HEK293 (cell line): ENCODE measurements at regions of chr11 and their contacts with region 1.

Region 1: DNA sequence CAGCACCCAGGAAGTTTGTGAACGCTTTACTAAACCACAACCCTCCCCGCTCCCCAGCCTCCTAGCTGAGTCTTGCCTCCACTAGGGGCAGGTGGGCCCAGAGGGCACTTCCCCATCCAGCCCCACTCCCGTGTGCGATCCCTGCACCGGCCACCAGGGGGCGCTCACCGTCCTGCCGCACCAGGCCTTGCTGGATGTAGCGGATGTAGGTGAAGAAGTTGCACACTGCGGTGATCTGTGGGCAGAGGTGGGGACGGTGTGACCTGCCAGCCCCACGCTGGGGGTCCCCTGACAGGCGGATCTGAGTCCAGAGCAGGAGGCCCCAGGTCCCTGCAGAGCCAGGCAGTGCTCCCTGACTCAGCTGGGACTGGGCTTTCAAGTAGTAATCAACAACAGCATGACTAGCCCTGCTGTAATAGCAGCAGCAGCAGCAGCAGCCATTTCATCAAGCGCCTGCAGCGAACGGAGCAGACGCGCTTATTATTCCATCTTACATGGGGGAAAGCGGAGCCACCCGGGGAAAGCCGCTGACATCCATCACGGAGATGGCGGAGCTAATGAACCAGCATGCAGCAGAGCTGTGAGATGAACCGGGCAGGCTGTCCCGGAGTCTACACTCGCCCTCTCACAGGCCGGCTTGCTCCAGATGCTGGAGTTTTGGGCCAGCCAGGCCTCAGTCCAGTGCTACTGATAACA is 7.9 kb upstream of the FADS3 start:
- H3K4me3 ChIP-seq: no peak overlapping the region
- H3K27ac ChIP-seq: no peak overlapping the region
- H3K4me1 ChIP-seq: no peaks in the 10 kb centered on the region
- CTCF ChIP-seq: peak; percentile 96

Region 2: GRCh38 chr11:61679893-61680621 is 219.2 kb before region 1 on chr11 and contains the start of gene DAGLA:
- CTCF ChIA-PET with region 1: no interaction called
- POLR2A ChIA-PET with region 1: no interaction called
- H3K4me3 ChIP-seq: peak within 1 kb of the TSS; percentile 49
- H3K27ac ChIP-seq: no peak within 1 kb of the TSS; the same call in 1 of the 2 replicates
- H3K4me1 ChIP-seq: peaks cover 3% of the 10 kb centered on the region; the same call in 1 of the 2 replicates
- CTCF ChIP-seq: peak; percentile 63; the same call in 1 of the 2 replicates

Region 3: DNA sequence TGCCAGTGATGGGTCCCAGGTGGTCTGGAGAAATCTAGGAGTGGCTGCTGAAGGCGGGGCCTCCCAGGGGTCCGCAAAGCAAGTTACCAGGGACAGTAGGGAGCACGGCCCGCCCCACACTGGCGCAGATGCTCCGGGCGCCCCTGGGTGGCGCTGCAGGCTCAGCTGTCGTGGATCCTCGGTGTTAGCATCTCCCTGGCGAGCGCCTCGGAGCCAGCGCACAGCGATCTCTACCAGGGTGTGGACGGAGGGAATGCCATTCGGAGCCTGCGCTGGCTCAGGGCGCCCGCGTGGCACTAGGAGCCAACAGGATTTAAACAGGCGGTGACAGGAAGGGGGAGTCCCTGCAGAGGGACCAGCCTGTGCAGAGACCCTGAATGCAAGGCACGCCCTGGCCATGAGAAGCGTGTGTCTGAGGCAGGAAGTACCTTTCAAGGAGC is 28.1 kb before region 1 on chr11:
- CTCF ChIA-PET with region 1: interaction called, 51 read pairs
- POLR2A ChIA-PET with region 1: no interaction called
- H3K4me3 ChIP-seq: no peak overlapping the region
- H3K27ac ChIP-seq: no peak overlapping the region
- H3K4me1 ChIP-seq: no peaks in the 10 kb centered on the region
- CTCF ChIP-seq: peak; percentile 95

Region 4: DNA sequence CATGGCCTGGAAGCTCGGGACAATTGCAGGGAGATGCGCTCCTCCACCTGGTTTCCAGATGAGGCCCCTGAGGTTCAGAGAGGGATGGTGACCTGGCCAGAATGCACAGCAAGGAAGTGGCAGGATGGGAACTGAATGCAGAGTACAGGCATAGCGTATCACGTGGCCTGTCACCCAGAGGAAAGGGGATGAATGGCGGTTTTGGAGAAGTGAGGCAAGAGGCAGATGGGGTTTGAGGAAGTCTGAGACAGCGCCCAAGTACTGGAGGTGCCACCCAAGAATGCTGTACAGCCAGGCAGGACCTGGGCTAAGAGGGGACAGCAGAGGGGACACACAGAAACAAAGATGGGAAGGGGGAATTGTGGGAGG is 13.2 kb after region 1 on chr11:
- CTCF ChIA-PET with region 1: interaction called, 59 read pairs
- POLR2A ChIA-PET with region 1: no interaction called
- H3K4me3 ChIP-seq: no peak overlapping the region
- H3K27ac ChIP-seq: no peak overlapping the region
- H3K4me1 ChIP-seq: no peaks in the 10 kb centered on the region
- CTCF ChIP-seq: no peak

Region 5: DNA sequence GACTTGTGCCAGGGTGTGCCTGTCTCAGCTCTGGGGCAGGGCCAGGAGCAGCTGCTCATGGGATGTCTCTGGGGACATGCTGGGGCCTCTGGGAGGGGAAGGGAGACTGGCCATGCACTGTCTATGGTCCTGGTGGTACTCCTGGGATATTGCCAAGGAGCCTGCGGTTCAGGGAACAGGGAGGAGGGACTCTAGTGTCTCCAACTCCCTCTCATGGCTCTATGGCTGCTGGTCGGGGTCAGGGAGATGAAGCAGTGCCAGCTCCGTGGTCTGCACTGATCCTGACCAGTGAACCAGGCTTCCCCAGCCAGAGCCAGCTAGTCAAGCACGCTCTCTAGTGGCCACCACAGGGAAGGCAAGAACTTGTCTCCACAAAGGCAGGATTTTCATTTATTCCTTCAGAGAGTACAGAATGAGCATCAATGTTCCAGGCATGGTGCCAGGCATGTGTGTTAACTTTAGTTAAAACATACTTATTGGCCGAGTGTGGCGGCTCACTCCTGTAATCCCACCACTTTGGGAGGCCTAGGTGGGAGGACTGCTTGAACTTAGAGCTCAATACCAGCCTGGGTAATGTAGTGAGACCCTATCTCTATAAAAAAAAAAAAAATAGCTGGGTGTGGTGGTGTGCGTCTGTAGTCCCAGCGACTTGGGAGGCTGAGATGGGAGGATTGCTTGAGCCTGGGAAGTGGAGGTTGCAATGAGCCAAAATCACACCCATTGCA is 48.4 kb after region 1 on chr11:
- CTCF ChIA-PET with region 1: interaction called, 329 read pairs
- POLR2A ChIA-PET with region 1: interaction called, 7 read pairs
- H3K4me3 ChIP-seq: no peak overlapping the region
- H3K27ac ChIP-seq: no peak overlapping the region
- H3K4me1 ChIP-seq: peaks cover 3% of the 10 kb centered on the region; the same call in 1 of the 2 replicates
- CTCF ChIP-seq: peak; percentile 77

Region 6: GRCh38 chr11:62061351-62062222 is 162.3 kb after region 1 on chr11:
- CTCF ChIA-PET with region 1: interaction called, 102 read pairs
- POLR2A ChIA-PET with region 1: no interaction called
- H3K4me3 ChIP-seq: no peak overlapping the region
- H3K27ac ChIP-seq: no peak overlapping the region
- H3K4me1 ChIP-seq: no peaks in the 10 kb centered on the region
- CTCF ChIP-seq: no peak

Region 7: GRCh38 chr11:62088331-62088933 is 189.1 kb after region 1 on chr11:
- CTCF ChIA-PET with region 1: interaction called, 258 read pairs
- POLR2A ChIA-PET with region 1: no interaction called
- H3K4me3 ChIP-seq: no peak overlapping the region
- H3K27ac ChIP-seq: no peak overlapping the region
- H3K4me1 ChIP-seq: no peaks in the 10 kb centered on the region
- CTCF ChIP-seq: no peak